ENCODE measurements at regions of chr4 and their contacts with region 1.

Region 1: GRCh38 chr4:81069706-81070331 is 39.3 kb downstream of the BMP3 start:
- DNase-seq: peak; percentile 77
- ATAC-seq: peak; percentile 61
- H3K4me3 ChIP-seq: no peak overlapping the region
- H3K4me3 Mint-ChIP-seq: no peak overlapping the region
- H3K27ac ChIP-seq: no peak overlapping the region
- H3K27ac Mint-ChIP-seq: no peak overlapping the region
- H3K4me1 ChIP-seq: no peaks in the 10 kb centered on the region
- H3K4me1 Mint-ChIP-seq: peaks cover 2% of the 10 kb centered on the region
- H3K27me3 ChIP-seq: no peaks in the 10 kb centered on the region
- H3K27me3 Mint-ChIP-seq: peaks cover 10% of the 10 kb centered on the region
- CTCF ChIP-seq: peak; percentile 98

Region 2: GRCh38 chr4:81052119-81053068 is 17.4 kb before region 1 on chr4:
- CTCF ChIA-PET with region 1: interaction called, 12 read pairs
- POLR2A ChIA-PET with region 1: no interaction called
- intact Hi-C with region 1: no loop called
- DNase-seq: peak; percentile 72
- ATAC-seq: peak; percentile 79
- H3K4me3 ChIP-seq: no peak overlapping the region
- H3K4me3 Mint-ChIP-seq: no peak overlapping the region
- H3K27ac ChIP-seq: peak overlapping the region; percentile 26 to 36
- H3K27ac Mint-ChIP-seq: peak overlapping the region; percentile 43
- H3K4me1 ChIP-seq: peaks cover 8 to 14% of the 10 kb centered on the region in 2 donors
- H3K4me1 Mint-ChIP-seq: peaks cover 12% of the 10 kb centered on the region
- H3K27me3 ChIP-seq: no peaks in the 10 kb centered on the region
- H3K27me3 Mint-ChIP-seq: peaks cover 5% of the 10 kb centered on the region
- CTCF ChIP-seq: peak; percentile 90

Region 3: DNA sequence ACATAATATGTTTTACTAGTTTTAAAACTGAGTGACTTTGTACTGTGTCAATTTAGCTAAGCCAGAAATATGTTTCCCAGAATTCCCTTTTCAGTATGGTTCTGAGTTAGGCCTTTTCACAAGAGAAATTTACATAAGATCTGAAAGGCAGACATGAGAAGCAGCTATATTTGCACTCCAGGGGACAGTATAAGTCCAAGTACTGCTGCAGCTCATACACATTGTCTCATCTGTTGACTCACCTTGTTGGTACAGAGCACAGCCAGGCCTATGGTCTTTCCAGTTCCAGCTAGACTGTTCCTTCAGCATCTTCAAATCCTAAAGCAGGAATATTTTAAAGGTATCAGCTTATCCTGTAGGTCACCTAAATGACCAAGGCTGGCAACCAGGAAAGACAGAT is 14.2 kb after region 1 on chr4:
- CTCF ChIA-PET with region 1: interaction called, 13 read pairs
- POLR2A ChIA-PET with region 1: no interaction called
- intact Hi-C with region 1: no loop called
- DNase-seq: no peak
- ATAC-seq: no peak
- H3K4me3 ChIP-seq: no peak overlapping the region
- H3K4me3 Mint-ChIP-seq: no peak overlapping the region
- H3K27ac ChIP-seq: no peak overlapping the region
- H3K27ac Mint-ChIP-seq: no peak overlapping the region
- H3K4me1 ChIP-seq: no peaks in the 10 kb centered on the region
- H3K4me1 Mint-ChIP-seq: peaks cover 2% of the 10 kb centered on the region
- H3K27me3 ChIP-seq: no peaks in the 10 kb centered on the region
- H3K27me3 Mint-ChIP-seq: no peaks in the 10 kb centered on the region
- CTCF ChIP-seq: no peak

Region 4: DNA sequence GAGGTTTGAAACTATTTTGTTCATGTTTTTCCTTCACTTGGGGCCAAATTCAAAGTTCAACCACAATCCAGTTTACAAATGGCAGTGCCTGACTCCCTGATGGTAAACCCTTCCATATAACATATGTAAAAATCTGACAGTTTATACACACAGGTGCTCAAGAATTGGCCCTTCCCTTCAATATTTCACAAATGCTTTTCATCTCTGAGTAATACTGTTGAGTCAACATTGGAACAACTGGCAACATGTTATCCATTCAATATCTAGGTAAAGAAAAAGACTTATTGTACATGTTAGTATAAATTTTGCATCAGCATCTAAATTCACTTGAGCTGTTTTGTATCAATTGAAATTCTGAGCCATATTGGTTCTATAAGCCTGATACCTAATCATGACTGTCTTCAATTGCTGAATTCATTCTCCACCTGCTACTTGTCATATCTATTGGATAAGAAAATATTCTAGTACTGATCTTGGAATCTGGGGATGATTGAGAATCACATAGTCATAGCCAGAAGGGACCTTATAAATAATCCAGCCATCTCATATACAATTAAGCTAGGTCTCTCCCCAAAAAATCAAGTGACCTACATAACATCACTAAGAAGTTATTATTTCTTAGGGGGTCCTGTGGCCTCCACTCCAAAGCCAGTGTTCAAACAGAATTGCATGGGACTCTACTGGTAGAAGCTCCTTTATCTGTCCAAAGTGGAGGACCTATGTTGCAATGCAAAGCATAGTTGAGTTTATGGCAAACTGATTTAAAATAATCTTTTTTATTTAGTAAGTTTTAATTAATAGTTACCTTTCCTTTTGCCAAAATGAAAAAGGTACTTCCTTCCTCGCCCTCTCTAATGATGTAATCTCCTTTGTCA is 83.3 kb after region 1 on chr4:
- CTCF ChIA-PET with region 1: no interaction called
- POLR2A ChIA-PET with region 1: no interaction called
- intact Hi-C with region 1: no loop called
- DNase-seq: no peak
- ATAC-seq: no peak
- H3K4me3 ChIP-seq: no peak overlapping the region
- H3K4me3 Mint-ChIP-seq: peak overlapping the region; percentile 89
- H3K27ac ChIP-seq: no peak overlapping the region
- H3K27ac Mint-ChIP-seq: peak overlapping the region; percentile 89
- H3K4me1 ChIP-seq: no peaks in the 10 kb centered on the region
- H3K4me1 Mint-ChIP-seq: no peaks in the 10 kb centered on the region
- H3K27me3 ChIP-seq: no peaks in the 10 kb centered on the region
- H3K27me3 Mint-ChIP-seq: no peaks in the 10 kb centered on the region
- CTCF ChIP-seq: no peak

Region 5: DNA sequence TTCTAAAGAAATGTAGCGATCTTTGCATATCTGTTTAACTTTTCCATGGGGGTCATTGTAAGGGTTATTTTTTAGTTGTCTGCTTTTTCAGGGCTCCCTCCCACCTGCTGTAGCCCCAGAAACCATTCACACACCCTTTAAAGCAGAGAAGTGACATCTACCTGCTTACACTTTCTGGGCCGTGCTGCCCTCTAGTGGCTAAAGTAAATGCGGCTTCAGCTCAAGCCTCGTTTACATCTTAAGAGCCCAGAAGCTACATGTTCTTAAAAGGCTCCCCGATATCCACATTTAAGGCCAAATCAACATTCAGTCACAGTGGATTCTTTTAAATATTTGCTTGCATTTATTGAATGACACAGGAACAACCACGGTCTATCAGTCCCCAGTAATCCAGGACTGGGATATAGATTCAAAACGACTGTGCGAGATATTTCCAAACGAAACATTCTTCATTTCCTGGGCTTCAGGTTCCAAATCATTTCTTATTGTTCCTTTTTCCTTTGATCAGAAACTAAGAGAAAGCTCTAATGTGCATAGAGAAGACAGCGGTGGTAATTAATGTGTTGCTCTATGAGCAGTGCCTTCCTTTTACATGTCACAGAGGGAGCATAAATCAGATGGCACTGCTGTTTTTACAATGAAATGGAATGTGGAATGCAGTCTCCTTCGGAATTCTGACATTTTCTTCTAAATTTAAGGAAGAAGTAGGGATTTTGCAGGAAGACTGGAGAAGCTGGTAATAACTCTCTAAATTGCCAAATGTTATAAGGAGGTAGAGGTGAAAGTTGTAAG is 282.0 kb after region 1 on chr4:
- CTCF ChIA-PET with region 1: interaction called, 30 read pairs
- POLR2A ChIA-PET with region 1: no interaction called
- intact Hi-C with region 1: loop called (anchors 1 kb)
- DNase-seq: peak; percentile 73
- ATAC-seq: peak; percentile 60
- H3K4me3 ChIP-seq: no peak overlapping the region
- H3K4me3 Mint-ChIP-seq: no peak overlapping the region
- H3K27ac ChIP-seq: no peak overlapping the region
- H3K27ac Mint-ChIP-seq: no peak overlapping the region
- H3K4me1 ChIP-seq: no peaks in the 10 kb centered on the region
- H3K4me1 Mint-ChIP-seq: no peaks in the 10 kb centered on the region
- H3K27me3 ChIP-seq: no peaks in the 10 kb centered on the region
- H3K27me3 Mint-ChIP-seq: peaks cover 14% of the 10 kb centered on the region
- CTCF ChIP-seq: peak; percentile 93

Region 6: GRCh38 chr4:82201805-82202641 is 1132.2 kb after region 1 on chr4:
- CTCF ChIA-PET with region 1: interaction called, 10 read pairs
- POLR2A ChIA-PET with region 1: no interaction called
- intact Hi-C with region 1: no loop called
- DNase-seq: peak; percentile 69
- ATAC-seq: peak; percentile 43
- H3K4me3 ChIP-seq: no peak overlapping the region
- H3K4me3 Mint-ChIP-seq: no peak overlapping the region
- H3K27ac ChIP-seq: no peak overlapping the region
- H3K27ac Mint-ChIP-seq: no peak overlapping the region
- H3K4me1 ChIP-seq: no peaks in the 10 kb centered on the region
- H3K4me1 Mint-ChIP-seq: no peaks in the 10 kb centered on the region
- H3K27me3 ChIP-seq: no peaks in the 10 kb centered on the region
- H3K27me3 Mint-ChIP-seq: peaks cover 16% of the 10 kb centered on the region
- CTCF ChIP-seq: peak; percentile 85